PC-3 (cell line): ENCODE measurements at regions of chr14 and their contacts with region 1.

Region 1: DNA sequence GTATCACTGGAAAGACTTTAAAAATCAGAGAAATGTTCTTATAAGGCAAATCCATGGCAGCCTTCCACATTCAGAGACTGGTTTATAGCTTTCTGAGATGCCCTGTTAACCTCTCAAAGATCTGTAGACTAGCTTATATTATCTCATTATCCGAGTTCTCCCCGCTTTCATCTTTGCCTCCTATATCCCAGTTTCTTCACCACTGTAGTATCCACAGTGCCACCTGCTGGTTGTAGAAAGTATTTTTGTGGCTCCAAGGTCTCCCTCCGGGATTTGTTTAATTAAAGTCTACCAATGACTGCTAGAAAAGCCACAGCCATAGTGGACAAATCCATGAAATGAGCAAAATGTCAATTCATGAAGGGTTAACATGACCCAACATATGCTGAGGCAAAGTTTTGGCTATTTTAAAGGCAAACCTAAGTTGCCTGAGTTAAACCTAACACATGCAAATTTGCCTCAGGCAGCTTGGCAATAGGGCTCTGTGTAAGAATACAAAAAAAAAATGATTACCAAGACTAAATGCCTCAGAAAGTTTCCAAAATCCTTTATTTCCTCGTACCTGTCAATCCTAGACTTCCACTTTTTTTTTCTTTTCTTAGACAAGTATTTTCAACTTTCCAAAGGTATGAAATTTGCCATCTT is 218.8 kb upstream of the BMP4 start:
- DNase-seq: peak; percentile 100
- ATAC-seq: peak; percentile 61
- H3K4me3 ChIP-seq: no peak overlapping the region
- H3K27ac ChIP-seq: no peak overlapping the region
- H3K4me1 ChIP-seq: peaks cover 73% of the 10 kb centered on the region
- H3K27me3 ChIP-seq: no peaks in the 10 kb centered on the region
- CTCF ChIP-seq: peak; percentile 100

Region 2: GRCh38 chr14:53539489-53540126 is 635.8 kb before region 1 on chr14:
- CTCF ChIA-PET with region 1: interaction called, 3 read pairs
- POLR2A ChIA-PET with region 1: no interaction called
- intact Hi-C with region 1: loop called (anchors 1 kb)
- DNase-seq: peak; percentile 92
- ATAC-seq: peak; percentile 62
- H3K4me3 ChIP-seq: no peak overlapping the region
- H3K27ac ChIP-seq: peak overlapping the region; percentile 3; the same call in 1 of the 2 replicates
- H3K4me1 ChIP-seq: peaks cover 26% of the 10 kb centered on the region
- H3K27me3 ChIP-seq: no peaks in the 10 kb centered on the region
- CTCF ChIP-seq: peak; percentile 98

Region 3: GRCh38 chr14:53929871-53930715 is 245.3 kb before region 1 on chr14:
- CTCF ChIA-PET with region 1: no interaction called
- POLR2A ChIA-PET with region 1: interaction called, 4 read pairs
- intact Hi-C with region 1: loop called (anchors 1 kb)
- DNase-seq: peak; percentile 68
- ATAC-seq: peak; percentile 68
- H3K4me3 ChIP-seq: no peak overlapping the region
- H3K27ac ChIP-seq: no peak overlapping the region
- H3K4me1 ChIP-seq: peaks cover 25% of the 10 kb centered on the region
- H3K27me3 ChIP-seq: no peaks in the 10 kb centered on the region
- CTCF ChIP-seq: peak; percentile 94

Region 4: GRCh38 chr14:54085232-54085761 is 90.1 kb before region 1 on chr14:
- CTCF ChIA-PET with region 1: interaction called, 8 read pairs
- POLR2A ChIA-PET with region 1: no interaction called
- intact Hi-C with region 1: loop called (anchors 1 kb)
- DNase-seq: no peak
- ATAC-seq: no peak
- H3K4me3 ChIP-seq: no peak overlapping the region
- H3K27ac ChIP-seq: no peak overlapping the region
- H3K4me1 ChIP-seq: no peaks in the 10 kb centered on the region
- H3K27me3 ChIP-seq: no peaks in the 10 kb centered on the region
- CTCF ChIP-seq: no peak

Region 5: DNA sequence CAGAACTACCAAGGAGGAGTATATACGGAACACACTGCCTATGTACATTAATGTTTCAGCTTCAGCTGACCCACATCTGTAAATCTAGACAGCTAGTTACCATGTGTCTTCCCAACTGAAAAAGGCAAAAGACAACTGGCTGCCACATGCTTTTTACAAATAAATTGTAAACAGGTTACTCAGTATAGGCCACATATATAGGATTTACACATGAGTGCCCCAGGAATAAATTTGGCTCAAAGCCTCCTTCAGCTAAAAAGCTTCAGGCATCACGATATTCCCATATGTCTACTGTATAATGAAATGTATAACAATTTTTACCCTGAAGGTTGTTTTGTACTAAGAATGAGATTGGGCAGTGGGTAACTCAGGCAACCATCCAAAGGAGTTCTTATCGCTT is 42.9 kb before region 1 on chr14:
- CTCF ChIA-PET with region 1: no interaction called
- POLR2A ChIA-PET with region 1: no interaction called
- intact Hi-C with region 1: no loop called
- DNase-seq: peak; percentile 51
- ATAC-seq: no peak
- H3K4me3 ChIP-seq: no peak overlapping the region
- H3K27ac ChIP-seq: no peak overlapping the region
- H3K4me1 ChIP-seq: peaks cover 25% of the 10 kb centered on the region
- H3K27me3 ChIP-seq: no peaks in the 10 kb centered on the region
- CTCF ChIP-seq: no peak

Region 6: GRCh38 chr14:54147282-54147681 is 28.1 kb before region 1 on chr14:
- CTCF ChIA-PET with region 1: no interaction called
- POLR2A ChIA-PET with region 1: no interaction called
- intact Hi-C with region 1: no loop called
- DNase-seq: peak; percentile 94
- ATAC-seq: peak; percentile 81
- H3K4me3 ChIP-seq: no peak overlapping the region
- H3K27ac ChIP-seq: no peak overlapping the region
- H3K4me1 ChIP-seq: peaks cover 8% of the 10 kb centered on the region; the same call in 1 of the 2 replicates
- H3K27me3 ChIP-seq: no peaks in the 10 kb centered on the region
- CTCF ChIP-seq: no peak

Region 7: DNA sequence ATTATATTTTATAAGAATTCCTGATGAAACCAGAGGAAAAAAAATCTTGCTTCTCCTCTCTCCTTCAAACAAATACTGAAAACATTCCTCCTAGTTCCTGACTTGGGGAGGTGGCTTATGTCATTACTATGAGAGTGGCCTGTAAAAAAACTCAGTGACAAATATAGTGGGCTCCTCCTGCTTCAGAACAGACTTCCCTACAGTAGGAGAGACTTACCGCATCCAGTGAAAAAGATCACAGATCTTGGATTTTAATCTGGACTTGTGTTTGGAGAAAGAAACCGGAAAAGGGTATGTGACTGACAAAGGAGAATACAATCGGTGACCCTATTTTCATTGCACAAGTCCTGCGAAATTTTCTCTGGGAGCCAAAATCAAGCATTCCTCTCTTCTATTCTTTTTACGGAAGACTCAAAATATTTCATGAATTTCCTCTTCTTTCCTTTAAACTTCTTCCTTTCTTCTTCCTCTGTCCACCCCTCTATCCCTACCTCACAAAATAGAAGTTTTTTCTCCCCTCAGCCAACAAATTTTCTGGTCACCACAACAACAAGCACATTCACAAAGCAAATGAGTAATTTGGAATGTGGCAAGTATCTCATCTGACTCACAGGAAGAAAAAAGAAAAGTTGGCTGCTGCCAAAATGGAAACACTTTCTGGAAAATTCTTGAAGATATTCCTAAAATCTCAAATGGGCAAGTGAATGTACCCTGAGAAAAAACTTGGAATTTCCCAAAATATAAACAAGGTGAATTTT is 36.3 kb after region 1 on chr14:
- CTCF ChIA-PET with region 1: interaction called, 3 read pairs
- POLR2A ChIA-PET with region 1: no interaction called
- intact Hi-C with region 1: loop called (anchors 2 kb)
- DNase-seq: peak; percentile 99
- ATAC-seq: peak; percentile 89
- H3K4me3 ChIP-seq: peak overlapping the region; percentile 25
- H3K27ac ChIP-seq: peak overlapping the region; percentile 84
- H3K4me1 ChIP-seq: peaks cover 36% of the 10 kb centered on the region
- H3K27me3 ChIP-seq: no peaks in the 10 kb centered on the region
- CTCF ChIP-seq: no peak

Region 8: GRCh38 chr14:54241517-54241916 is 66.1 kb after region 1 on chr14:
- CTCF ChIA-PET with region 1: no interaction called
- POLR2A ChIA-PET with region 1: no interaction called
- intact Hi-C with region 1: no loop called
- DNase-seq: no peak
- ATAC-seq: no peak
- H3K4me3 ChIP-seq: no peak overlapping the region
- H3K27ac ChIP-seq: no peak overlapping the region
- H3K4me1 ChIP-seq: no peaks in the 10 kb centered on the region
- H3K27me3 ChIP-seq: no peaks in the 10 kb centered on the region
- CTCF ChIP-seq: no peak

Region 9: GRCh38 chr14:54338696-54339317 is 163.4 kb after region 1 on chr14:
- CTCF ChIA-PET with region 1: interaction called, 23 read pairs
- POLR2A ChIA-PET with region 1: no interaction called
- intact Hi-C with region 1: loop called (anchors 1 kb)
- DNase-seq: peak; percentile 93
- ATAC-seq: peak; percentile 79
- H3K4me3 ChIP-seq: no peak overlapping the region
- H3K27ac ChIP-seq: no peak overlapping the region
- H3K4me1 ChIP-seq: peaks cover 35% of the 10 kb centered on the region
- H3K27me3 ChIP-seq: no peaks in the 10 kb centered on the region
- CTCF ChIP-seq: peak; percentile 99